WTC11 (cell line): ENCODE measurements at regions of chr19 and their contacts with region 1.

Region 1: GRCh38 chr19:36128392-36128736 is 11.5 kb upstream of the CAPNS1 start:
- DNase-seq: peak; percentile 44
- ATAC-seq: peak; percentile 21
- H3K4me3 Mint-ChIP-seq: peak overlapping the region; percentile 85
- H3K27ac Mint-ChIP-seq: peak overlapping the region; percentile 95
- H3K4me1 Mint-ChIP-seq: peaks cover 5% of the 10 kb centered on the region; the same call in 1 of the 2 replicates
- H3K27me3 Mint-ChIP-seq: no peaks in the 10 kb centered on the region
- CTCF ChIP-seq: no peak

Region 2: GRCh38 chr19:36073121-36073872 is 55.1 kb before region 1 on chr19:
- CTCF ChIA-PET with region 1: no interaction called
- POLR2A ChIA-PET with region 1: no interaction called
- DNase-seq: no peak
- ATAC-seq: no peak
- H3K4me3 Mint-ChIP-seq: no peak overlapping the region
- H3K27ac Mint-ChIP-seq: no peak overlapping the region
- H3K4me1 Mint-ChIP-seq: no peaks in the 10 kb centered on the region
- H3K27me3 Mint-ChIP-seq: no peaks in the 10 kb centered on the region
- CTCF ChIP-seq: no peak

Region 3: GRCh38 chr19:36114763-36115452 is 13.5 kb before region 1 on chr19 and contains the start of gene POLR2I:
- CTCF ChIA-PET with region 1: interaction called, 28 read pairs
- POLR2A ChIA-PET with region 1: interaction called, 7 read pairs
- DNase-seq: peak; percentile 99
- ATAC-seq: peak; percentile 93
- H3K4me3 Mint-ChIP-seq: peak within 1 kb of the TSS; percentile 95
- H3K27ac Mint-ChIP-seq: peak within 1 kb of the TSS; percentile 100
- H3K4me1 Mint-ChIP-seq: peaks cover 35% of the 10 kb centered on the region
- H3K27me3 Mint-ChIP-seq: peaks cover 3% of the 10 kb centered on the region
- CTCF ChIP-seq: no peak
- total RNA-seq, gene POLR2I: 161 to 177 TPM (median 165 TPM) in 3 replicates

Region 4: DNA sequence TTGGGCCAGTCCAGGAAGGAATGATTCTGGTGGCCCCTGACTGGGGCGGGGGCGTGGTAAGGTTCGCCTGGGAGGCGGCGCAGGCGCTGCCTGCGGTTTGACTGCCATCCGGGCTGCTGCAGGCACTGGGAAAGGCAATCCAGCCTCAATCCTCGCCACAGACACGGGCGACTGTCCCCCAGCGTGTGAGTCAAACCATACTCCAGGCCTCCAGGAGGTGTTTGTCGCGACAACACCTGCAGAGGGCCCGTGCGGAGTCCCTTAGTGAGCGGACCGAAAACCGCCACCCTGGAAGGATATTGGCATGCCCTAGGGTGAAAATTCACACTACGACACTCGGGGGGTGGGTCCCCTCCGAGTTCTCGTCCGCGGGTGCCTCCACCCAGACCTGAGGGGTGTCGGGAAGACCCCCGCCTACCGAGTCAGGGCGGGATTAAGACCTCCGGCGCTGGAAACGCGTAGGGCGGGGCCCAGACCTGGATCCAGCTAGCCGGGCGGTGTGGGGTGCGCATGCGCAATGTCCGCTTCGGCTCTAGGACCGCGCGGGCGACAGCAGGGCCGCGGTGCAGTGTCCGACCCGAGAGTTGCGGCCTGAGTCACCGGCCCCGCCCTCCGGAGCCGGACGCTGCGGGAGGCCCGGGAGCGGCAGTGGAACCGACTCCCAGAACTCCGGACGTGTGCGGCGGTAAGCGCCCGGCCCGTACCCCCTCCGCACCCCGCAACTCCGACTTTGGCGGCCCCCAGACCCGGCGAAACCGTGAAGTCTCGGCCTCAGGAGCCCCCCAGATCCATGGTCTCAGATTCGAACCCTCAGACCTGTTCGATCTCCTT is 11.3 kb after region 1 on chr19 and contains the start of gene CAPNS1:
- CTCF ChIA-PET with region 1: interaction called, 22 read pairs
- POLR2A ChIA-PET with region 1: interaction called, 9 read pairs
- DNase-seq: peak; percentile 99
- ATAC-seq: peak; percentile 62
- H3K4me3 Mint-ChIP-seq: peak within 1 kb of the TSS; percentile 99
- H3K27ac Mint-ChIP-seq: peak within 1 kb of the TSS; percentile 99
- H3K4me1 Mint-ChIP-seq: peaks cover 14% of the 10 kb centered on the region
- H3K27me3 Mint-ChIP-seq: peaks cover 8% of the 10 kb centered on the region
- CTCF ChIP-seq: no peak
- total RNA-seq, gene CAPNS1: 332 to 358 TPM (median 344 TPM) in 3 replicates

Region 5: DNA sequence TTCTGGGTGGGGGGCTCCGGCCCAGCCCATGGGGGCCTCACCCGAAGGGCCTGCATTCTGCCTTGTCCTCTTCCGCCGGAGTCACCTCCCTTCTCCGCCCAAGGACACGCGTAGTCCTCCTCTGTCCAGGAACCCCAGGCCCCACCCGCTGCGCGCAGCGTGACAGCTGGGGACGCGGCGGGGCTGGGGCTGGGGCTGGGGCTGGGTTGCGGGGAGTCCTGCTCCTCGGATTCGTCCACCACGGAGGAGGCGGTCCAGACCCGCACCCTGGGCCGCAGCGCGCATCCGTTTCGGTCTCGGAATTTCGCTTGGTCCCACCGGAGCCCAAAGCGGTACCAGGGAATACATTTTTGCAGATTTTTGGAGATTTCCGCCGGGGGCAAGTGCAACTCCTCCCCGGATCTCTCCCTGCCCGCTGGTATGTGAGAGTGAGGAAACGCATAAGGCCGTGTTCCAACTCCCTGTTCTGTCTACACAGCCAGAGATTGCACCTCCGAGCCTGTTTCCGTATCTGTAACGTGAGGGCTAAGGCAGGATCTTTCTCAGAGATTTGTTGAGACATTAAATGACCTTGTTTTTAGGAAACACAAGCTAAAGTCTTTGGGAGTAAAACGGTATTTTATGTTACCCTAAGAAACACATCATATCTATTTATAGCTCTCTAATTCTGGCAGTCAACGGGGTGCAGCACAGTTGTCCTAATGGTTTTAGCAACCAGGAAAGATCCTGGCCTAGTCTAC is 24.2 kb after region 1 on chr19 and contains the start of gene COX7A1:
- CTCF ChIA-PET with region 1: interaction called, 11 read pairs
- POLR2A ChIA-PET with region 1: interaction called, 6 read pairs
- DNase-seq: no peak
- ATAC-seq: peak; percentile 55
- H3K4me3 Mint-ChIP-seq: no peak within 1 kb of the TSS
- H3K27ac Mint-ChIP-seq: peak within 1 kb of the TSS; percentile 49; the same call in 1 of the 2 replicates
- H3K4me1 Mint-ChIP-seq: peaks cover 28% of the 10 kb centered on the region
- H3K27me3 Mint-ChIP-seq: no peaks in the 10 kb centered on the region
- CTCF ChIP-seq: no peak
- total RNA-seq, gene COX7A1: 0.64 to 1.0 TPM (median 0.70 TPM) in 3 replicates

Region 6: GRCh38 chr19:36169084-36169760 is 40.9 kb after region 1 on chr19:
- CTCF ChIA-PET with region 1: interaction called, 44 read pairs
- POLR2A ChIA-PET with region 1: interaction called, 4 read pairs
- DNase-seq: no peak
- ATAC-seq: no peak
- H3K4me3 Mint-ChIP-seq: no peak overlapping the region
- H3K27ac Mint-ChIP-seq: peak overlapping the region; percentile 10; the same call in 1 of the 2 replicates
- H3K4me1 Mint-ChIP-seq: 0 out of 2 replicates have a peak, but pooled peaks cover 7% of the 10 kb centered on the region
- H3K27me3 Mint-ChIP-seq: peaks cover 3% of the 10 kb centered on the region; the same call in 1 of the 2 replicates
- CTCF ChIP-seq: no peak

Region 7: GRCh38 chr19:36214386-36215275 is 86.3 kb after region 1 on chr19 and contains the starts of genes ZNF146 and ZNF565:
- CTCF ChIA-PET with region 1: interaction called, 10 read pairs
- POLR2A ChIA-PET with region 1: interaction called, 3 read pairs
- DNase-seq: peak; percentile 98
- ATAC-seq: peak; percentile 96
- H3K4me3 Mint-ChIP-seq: no peak within 1 kb of the TSS
- H3K27ac Mint-ChIP-seq: no peak within 1 kb of the TSS; the same call in none of the 2 replicates
- H3K4me1 Mint-ChIP-seq: peaks cover 19% of the 10 kb centered on the region
- H3K27me3 Mint-ChIP-seq: no peaks in the 10 kb centered on the region
- CTCF ChIP-seq: no peak
- total RNA-seq, gene ZNF146: 122 to 128 TPM (median 124 TPM) in 3 replicates
- total RNA-seq, gene ZNF565: 2.5 to 3.0 TPM (median 2.8 TPM) in 3 replicates

Region 8: DNA sequence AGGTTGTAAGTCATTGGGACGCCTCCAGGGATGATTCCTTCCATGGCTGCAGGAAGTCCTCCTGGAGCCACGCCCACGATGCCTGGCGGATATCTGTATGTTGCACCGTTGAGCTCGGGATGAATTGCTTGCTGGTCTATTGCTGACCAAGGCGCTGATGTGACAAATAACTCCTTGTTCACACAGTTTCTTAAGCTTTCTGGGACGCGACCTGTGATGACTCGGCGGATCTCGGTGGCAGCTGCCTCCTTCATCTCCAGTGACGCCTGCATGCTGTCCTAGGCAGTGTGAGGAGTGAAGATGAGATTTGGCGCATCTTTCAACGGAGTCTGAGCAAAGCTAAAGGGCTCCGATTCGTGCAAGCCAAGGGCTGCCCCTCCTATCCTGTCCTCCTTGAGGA is 368.6 kb after region 1 on chr19:
- CTCF ChIA-PET with region 1: no interaction called
- POLR2A ChIA-PET with region 1: interaction called, 12 read pairs
- DNase-seq: no peak
- ATAC-seq: no peak
- H3K4me3 Mint-ChIP-seq: no peak overlapping the region
- H3K27ac Mint-ChIP-seq: no peak overlapping the region
- H3K4me1 Mint-ChIP-seq: no peaks in the 10 kb centered on the region
- H3K27me3 Mint-ChIP-seq: 0 out of 2 replicates have a peak, but pooled peaks cover 2% of the 10 kb centered on the region
- CTCF ChIP-seq: no peak